CD14-positive monocyte (primary cell): ENCODE measurements at regions of chr2 and their contacts with region 1.

Region 1: GRCh38 chr2:8761529-8762164 is 75.8 kb downstream of the KIDINS220 start:
- DNase-seq: peak in 2 of 3 donors; percentile 3 to 8
- H3K4me3 ChIP-seq: no peak overlapping the region
- H3K4me3 Mint-ChIP-seq: no peak overlapping the region
- H3K27ac ChIP-seq: no peak overlapping the region
- H3K27ac Mint-ChIP-seq: no peak overlapping the region
- H3K4me1 ChIP-seq: no peaks in the 10 kb centered on the region
- H3K4me1 Mint-ChIP-seq: no peaks in the 10 kb centered on the region
- H3K27me3 ChIP-seq: no peaks in the 10 kb centered on the region
- H3K27me3 Mint-ChIP-seq: peaks cover 0 to 2% (median 0%) of the 10 kb centered on the region in 3 donors
- CTCF ChIP-seq: peak; percentile 62

Region 2: GRCh38 chr2:7427293-7428060 is 1334.2 kb before region 1 on chr2:
- intact Hi-C with region 1: loop called in 1 of 2 experiments (anchors 5 kb)
- DNase-seq: peak; percentile 29 to 63 (median 47)
- H3K4me3 ChIP-seq: no peak overlapping the region
- H3K4me3 Mint-ChIP-seq: no peak overlapping the region
- H3K27ac ChIP-seq: no peak overlapping the region
- H3K27ac Mint-ChIP-seq: no peak overlapping the region
- H3K4me1 ChIP-seq: peaks cover 49 to 51% of the 10 kb centered on the region in 2 donors
- H3K4me1 Mint-ChIP-seq: peaks cover 48% of the 10 kb centered on the region
- H3K27me3 ChIP-seq: no peaks in the 10 kb centered on the region
- H3K27me3 Mint-ChIP-seq: peaks cover 0 to 1% (median 0%) of the 10 kb centered on the region in 3 donors
- CTCF ChIP-seq: peak; percentile 84